ENCODE measurements at regions of chr10 and their contacts with region 1.

Region 1: GRCh38 chr10:103576862-103577261 is 83.4 kb downstream of the NEURL1 start:
- DNase-seq: no peak
- H3K4me3 ChIP-seq: no peak overlapping the region
- H3K27ac ChIP-seq: no peak overlapping the region
- H3K27me3 ChIP-seq: peaks cover 67% of the 10 kb centered on the region
- CTCF ChIP-seq: no peak

Region 2: GRCh38 chr10:103013416-103013815 is 563.4 kb before region 1 on chr10:
- CTCF ChIA-PET with region 1: no interaction called
- POLR2A ChIA-PET with region 1: no interaction called
- DNase-seq: no peak
- H3K4me3 ChIP-seq: no peak overlapping the region
- H3K27ac ChIP-seq: no peak overlapping the region
- H3K27me3 ChIP-seq: no peaks in the 10 kb centered on the region
- CTCF ChIP-seq: no peak

Region 3: DNA sequence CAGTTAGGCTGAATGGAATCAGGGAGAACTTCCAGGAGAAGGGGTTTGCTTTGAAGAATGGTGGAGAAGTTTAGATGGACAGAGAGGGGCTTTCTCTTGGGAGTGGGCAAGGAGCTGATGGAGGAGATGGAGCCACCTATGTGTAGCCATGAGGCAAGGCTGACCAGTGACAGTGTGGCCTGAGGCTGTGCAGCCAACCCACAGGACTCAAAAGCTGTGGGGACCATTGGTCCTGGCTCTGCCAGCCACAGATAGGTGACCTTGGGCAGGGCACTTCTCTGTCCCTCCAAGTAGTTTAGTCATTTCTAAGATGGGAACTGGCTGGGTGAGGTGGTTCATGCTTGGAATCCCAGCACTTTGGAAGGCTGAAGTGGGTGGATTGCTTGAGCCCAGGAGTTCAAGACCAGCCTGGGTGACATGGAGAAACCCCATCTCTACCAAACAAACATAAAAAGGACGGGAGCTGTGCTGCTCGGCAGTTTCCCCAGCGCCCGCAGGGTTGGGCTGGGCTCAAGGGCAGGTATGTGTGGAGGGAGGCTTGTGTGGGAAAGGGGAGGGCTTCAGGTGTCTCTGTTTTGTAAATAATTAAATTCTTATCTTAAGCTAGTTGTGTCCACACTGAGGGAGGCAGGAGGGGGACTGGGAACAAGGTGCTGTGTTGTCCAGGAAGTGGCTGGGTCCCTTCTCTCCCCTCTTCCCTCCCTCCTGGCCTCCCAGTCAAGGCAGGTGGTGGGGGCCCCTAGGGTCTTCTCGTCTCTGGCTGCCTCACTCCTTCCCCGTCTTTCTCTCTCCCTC is 64.5 kb before region 1 on chr10:
- CTCF ChIA-PET with region 1: no interaction called
- POLR2A ChIA-PET with region 1: interaction called, 17 read pairs
- DNase-seq: no peak
- H3K4me3 ChIP-seq: no peak overlapping the region
- H3K27ac ChIP-seq: no peak overlapping the region
- H3K27me3 ChIP-seq: peaks cover 60% of the 10 kb centered on the region
- CTCF ChIP-seq: no peak

Region 4: GRCh38 chr10:103534581-103535508 is 42.0 kb before region 1 on chr10:
- CTCF ChIA-PET with region 1: no interaction called
- POLR2A ChIA-PET with region 1: no interaction called
- DNase-seq: no peak
- H3K4me3 ChIP-seq: no peak overlapping the region
- H3K27ac ChIP-seq: no peak overlapping the region
- H3K27me3 ChIP-seq: peaks cover 44% of the 10 kb centered on the region
- CTCF ChIP-seq: no peak

Region 5: DNA sequence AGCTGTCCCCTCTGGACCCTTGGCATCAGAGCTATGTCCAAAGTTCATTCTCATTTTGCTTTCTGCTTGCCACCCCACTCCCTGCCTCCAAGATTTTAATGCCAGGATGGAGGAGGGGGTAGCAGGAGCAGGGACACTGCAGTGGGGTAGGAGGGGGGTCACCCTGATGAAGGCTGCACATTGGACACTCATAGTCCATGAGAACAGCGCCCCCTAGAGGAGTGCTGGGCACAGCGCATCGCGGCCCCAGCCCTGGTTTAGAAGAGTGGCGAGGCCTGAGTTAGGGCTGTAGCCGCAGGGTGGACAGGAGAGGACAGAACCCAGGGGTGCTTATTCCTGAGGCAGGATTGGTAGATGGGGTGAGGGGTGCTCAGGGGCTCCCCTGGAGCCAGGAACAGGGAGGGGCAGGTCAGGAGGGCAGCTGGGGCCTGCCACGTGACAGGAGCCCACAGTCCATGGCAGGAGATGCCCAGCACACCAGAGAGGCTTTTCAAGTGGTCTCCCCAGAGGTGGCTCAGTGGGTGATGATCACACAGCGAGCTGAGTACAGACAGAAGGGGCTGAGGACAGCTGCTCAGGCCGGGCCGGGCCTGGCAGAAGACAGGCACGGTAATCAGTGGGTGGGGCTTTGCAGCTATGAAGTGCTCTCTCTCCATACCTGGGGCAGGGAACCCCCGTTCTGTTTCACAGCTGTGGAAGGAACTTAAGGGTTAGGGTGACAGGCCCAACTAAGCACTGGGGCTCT is 11.9 kb before region 1 on chr10:
- CTCF ChIA-PET with region 1: interaction called, 10 read pairs
- POLR2A ChIA-PET with region 1: no interaction called
- DNase-seq: no peak
- H3K4me3 ChIP-seq: no peak overlapping the region
- H3K27ac ChIP-seq: no peak overlapping the region
- H3K27me3 ChIP-seq: peaks cover 58% of the 10 kb centered on the region
- CTCF ChIP-seq: peak; percentile 62